ENCODE measurements at regions of chr20 and their contacts with region 1.

Region 1: DNA sequence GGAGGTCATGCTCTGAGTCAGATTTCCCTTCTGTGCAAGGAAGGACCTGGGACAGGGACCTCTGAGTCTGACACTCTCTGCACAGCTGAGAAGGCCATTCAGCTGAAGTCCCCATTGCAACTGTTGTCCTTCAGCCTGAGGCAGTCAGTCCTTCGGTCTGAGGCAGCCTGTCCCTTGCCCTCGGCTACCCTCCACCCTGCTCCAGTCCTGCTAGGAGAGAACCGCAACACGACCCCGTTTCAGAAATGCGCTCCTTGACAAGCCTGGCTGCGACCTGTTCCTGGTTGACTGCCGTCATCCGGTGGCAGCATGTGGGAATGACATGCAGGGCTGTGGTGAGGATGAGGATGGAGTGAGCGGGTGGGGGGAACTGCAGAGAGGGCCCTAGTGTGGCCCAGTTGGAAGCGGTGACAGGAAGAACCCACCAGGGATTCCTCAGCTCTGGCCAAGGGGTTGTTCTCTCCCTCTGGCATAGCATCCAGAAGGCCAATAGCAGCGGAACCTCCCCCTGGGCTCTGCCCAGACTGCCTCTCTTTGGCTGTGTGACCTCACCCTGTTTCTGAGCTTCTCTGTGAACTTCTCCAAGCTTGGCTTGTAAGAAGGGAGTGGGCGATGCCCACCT is 40.3 kb upstream of the ANGPT4 start:
- DNase-seq: peak; percentile 69 to 76
- H3K4me3 ChIP-seq: no peak overlapping the region
- H3K27ac ChIP-seq: no peak overlapping the region
- H3K4me1 ChIP-seq: peaks cover 0 to 7% (median 3%) of the 10 kb centered on the region in 4 donors
- H3K27me3 ChIP-seq: peaks cover 0 to 55% of the 10 kb centered on the region in 2 donors
- CTCF ChIP-seq: peak; percentile 97 to 99

Region 2: DNA sequence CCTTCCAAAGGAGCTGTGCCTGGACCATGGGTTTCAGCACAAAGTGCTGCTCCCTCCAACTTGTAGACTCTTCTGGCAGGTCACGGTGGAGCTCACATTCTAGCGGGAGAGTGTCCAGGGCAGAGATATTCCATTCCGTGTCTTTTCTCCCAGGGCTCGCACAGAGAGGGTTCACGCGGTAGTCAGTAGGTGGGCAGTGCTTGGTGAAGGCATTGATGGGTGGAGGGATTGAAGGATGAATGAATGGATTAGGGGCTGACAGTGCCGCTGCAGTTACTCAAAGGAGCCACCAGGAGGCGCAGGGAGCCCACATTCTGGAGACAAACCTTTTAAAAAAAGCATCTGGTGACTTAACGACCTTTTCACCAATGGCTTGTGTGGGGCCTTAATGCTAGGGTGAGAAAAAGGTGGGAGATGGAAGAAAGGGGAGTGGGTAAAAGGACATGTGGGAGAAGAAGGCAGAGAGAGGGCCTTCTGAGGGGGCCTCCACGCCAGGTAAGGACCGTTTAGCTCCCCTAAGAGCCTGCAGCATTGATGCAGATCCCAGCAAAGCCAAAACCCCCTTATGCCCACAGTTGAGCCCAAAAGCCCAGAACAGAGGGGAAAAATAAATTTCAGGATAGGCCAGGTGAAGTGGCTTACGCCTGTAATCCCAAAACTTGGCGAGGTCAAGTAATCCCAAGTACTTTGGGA is 140.4 kb before region 1 on chr20:
- intact Hi-C with region 1: loop called (anchors 2 kb)
- DNase-seq: peak; percentile 40 to 75
- H3K4me3 ChIP-seq: no peak overlapping the region
- H3K27ac ChIP-seq: no peak overlapping the region
- H3K4me1 ChIP-seq: peaks cover 0 to 3% (median 0%) of the 10 kb centered on the region in 4 donors
- H3K27me3 ChIP-seq: peaks cover 0 to 33% of the 10 kb centered on the region in 2 donors
- CTCF ChIP-seq: peak; percentile 95 to 98

Region 3: GRCh38 chr20:884983-885952 is 71.2 kb before region 1 on chr20:
- intact Hi-C with region 1: loop called (anchors 2 kb)
- DNase-seq: peak; percentile 67 to 86
- H3K4me3 ChIP-seq: peak overlapping the region in 1 of 2 donors; percentile 21
- H3K27ac ChIP-seq: peak overlapping the region in 1 of 2 donors; percentile 69
- H3K4me1 ChIP-seq: peaks cover 0 to 48% (median 31%) of the 10 kb centered on the region in 4 donors
- H3K27me3 ChIP-seq: no peaks in the 10 kb centered on the region
- CTCF ChIP-seq: peak; percentile 52 to 55

Region 4: GRCh38 chr20:1041845-1042390 is 85.5 kb after region 1 on chr20:
- intact Hi-C with region 1: no loop called
- DNase-seq: no peak
- H3K4me3 ChIP-seq: no peak overlapping the region
- H3K27ac ChIP-seq: no peak overlapping the region
- H3K4me1 ChIP-seq: no peaks in the 10 kb centered on the region
- H3K27me3 ChIP-seq: no peaks in the 10 kb centered on the region
- CTCF ChIP-seq: no peak

Region 5: GRCh38 chr20:1122388-1123315 is 166.2 kb after region 1 on chr20:
- intact Hi-C with region 1: no loop called
- DNase-seq: peak in 1 of 2 donors; percentile 36
- H3K4me3 ChIP-seq: no peak overlapping the region
- H3K27ac ChIP-seq: peak overlapping the region; percentile 8 to 46
- H3K4me1 ChIP-seq: peaks cover 0 to 61% (median 38%) of the 10 kb centered on the region in 4 donors
- H3K27me3 ChIP-seq: no peaks in the 10 kb centered on the region
- CTCF ChIP-seq: no peak